Endothelial cell of umbilical vein (primary cell): ENCODE measurements at regions of chr4 and their contacts with region 1.

Region 1: GRCh38 chr4:89820010-89820409 is 17.0 kb downstream of the SNCA start:
- DNase-seq: no peak
- H3K4me3 ChIP-seq: no peak overlapping the region
- H3K27ac ChIP-seq: no peak overlapping the region
- H3K4me1 ChIP-seq: peaks cover 15% of the 10 kb centered on the region
- H3K27me3 ChIP-seq: no peaks in the 10 kb centered on the region
- CTCF ChIP-seq: no peak
- POLR2A ChIP-seq: no peak

Region 2: DNA sequence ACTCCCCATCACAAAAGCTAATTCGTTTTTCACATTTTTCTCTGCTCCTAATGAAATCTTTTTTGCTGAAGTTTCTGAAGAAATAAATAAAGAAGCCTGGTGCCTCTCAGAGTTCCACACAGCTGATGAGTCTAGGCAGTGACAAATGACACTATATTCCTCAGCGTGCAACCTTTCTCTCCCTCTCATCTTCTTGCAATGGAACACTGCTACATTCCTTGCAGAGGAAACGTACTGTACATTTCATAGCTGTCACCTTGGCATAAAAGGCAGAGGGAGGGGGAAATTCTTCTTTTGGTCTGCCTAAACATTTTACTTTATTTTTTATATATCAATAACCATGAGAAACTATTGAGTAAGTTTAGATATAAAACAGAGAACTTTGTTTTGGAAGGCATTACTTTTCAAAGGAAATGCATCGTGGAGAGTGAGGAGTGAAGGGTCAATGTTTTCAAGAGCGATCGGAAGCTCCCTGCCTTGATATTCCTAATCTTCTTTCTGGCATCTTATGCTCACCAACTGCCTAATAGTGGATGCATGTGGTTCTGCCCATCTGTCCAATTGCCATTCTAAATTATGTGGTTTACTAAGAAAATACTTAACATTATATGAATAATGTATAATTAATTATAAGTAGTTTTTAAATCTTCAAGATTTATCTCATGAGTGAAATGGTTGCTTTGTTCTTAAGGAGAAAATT is 12.4 kb before region 1 on chr4:
- CTCF ChIA-PET with region 1: interaction called, 5 read pairs
- POLR2A ChIA-PET with region 1: no interaction called
- dilution Hi-C with region 1: no loop called
- intact Hi-C with region 1: loop called (anchors 2 kb)
- DNase-seq: no peak
- H3K4me3 ChIP-seq: no peak overlapping the region
- H3K27ac ChIP-seq: no peak overlapping the region
- H3K4me1 ChIP-seq: no peaks in the 10 kb centered on the region
- H3K27me3 ChIP-seq: no peaks in the 10 kb centered on the region
- CTCF ChIP-seq: no peak
- POLR2A ChIP-seq: no peak

Region 3: GRCh38 chr4:89994176-89994873 is 174.3 kb after region 1 on chr4:
- CTCF ChIA-PET with region 1: no interaction called
- POLR2A ChIA-PET with region 1: no interaction called
- dilution Hi-C with region 1: no loop called
- intact Hi-C with region 1: no loop called
- DNase-seq: no peak
- H3K4me3 ChIP-seq: no peak overlapping the region
- H3K27ac ChIP-seq: no peak overlapping the region
- H3K4me1 ChIP-seq: no peaks in the 10 kb centered on the region
- H3K27me3 ChIP-seq: peaks cover 5 to 19% of the 10 kb centered on the region in 2 experiments
- CTCF ChIP-seq: no peak
- POLR2A ChIP-seq: no peak